Right ventricle myocardium inferior (tissue), 1 donor: ENCODE measurements at regions of chr6 and their contacts with region 1.

Region 1: DNA sequence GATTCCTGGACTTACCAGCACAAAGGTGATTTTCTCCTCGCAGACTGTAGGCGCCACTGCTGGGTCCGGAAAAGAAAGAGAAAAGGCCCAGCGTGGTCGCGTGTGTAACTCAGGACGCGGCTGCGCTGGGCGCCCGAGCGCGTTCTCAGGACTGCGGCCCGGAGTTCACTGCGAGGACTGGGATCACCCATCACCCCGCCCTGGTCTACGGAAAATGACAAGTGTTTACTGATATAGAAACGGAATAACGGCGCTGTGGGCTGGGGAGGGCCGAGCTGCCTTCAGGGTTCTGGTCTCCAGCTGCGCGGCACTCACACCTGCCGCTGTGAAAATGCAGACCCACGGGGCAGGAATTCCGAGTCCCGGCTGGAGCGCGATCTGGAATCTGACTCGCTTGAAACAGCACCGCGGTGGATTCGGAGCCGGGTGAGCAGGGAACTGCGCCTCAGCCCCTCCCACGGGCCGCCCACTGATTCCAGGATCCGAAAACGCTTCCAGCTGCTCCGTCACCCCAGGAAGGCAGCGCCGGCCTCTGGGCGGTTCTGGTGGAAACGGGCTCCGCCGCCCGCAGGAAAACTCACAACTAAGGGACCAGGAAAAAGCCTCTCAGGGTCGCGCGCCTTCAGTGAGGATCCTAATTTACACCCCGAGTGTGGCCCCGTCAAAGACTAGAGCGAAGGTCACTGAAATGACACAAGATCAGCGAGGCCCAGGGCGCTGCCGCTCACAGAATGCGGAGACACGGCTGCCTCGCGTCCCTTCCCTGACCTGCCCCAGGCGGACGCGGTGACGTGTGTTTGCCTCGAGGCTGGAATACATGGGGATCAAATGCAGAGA is 34.5 kb downstream of the HLA-A start:
- DNase-seq: peak; percentile 94
- ATAC-seq: peak; percentile 96

Region 2: DNA sequence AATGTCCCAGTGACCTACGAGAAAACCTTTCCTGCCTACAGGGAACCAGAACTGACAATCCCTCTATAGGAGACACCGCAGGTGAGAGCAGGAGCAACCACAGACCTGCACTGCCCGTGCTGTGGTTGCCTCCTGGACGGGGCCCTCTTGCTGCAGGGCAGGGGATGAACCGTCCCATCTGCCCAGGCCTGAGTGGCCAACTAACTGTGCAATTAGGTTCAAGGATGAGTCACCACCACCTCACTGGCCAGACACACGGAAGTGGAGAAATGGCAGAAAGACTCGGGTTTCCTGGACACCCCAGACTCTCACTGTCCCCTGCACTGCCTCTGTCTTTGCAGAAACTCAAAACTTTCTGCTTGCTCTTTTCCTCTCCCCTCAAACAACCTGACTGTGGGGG is 163.0 kb before region 1 on chr6:
- intact Hi-C with region 1: no loop called
- DNase-seq: no peak
- ATAC-seq: no peak

Region 3: GRCh38 chr6:29887819-29888776 is 88.7 kb before region 1 on chr6:
- intact Hi-C with region 1: loop called (anchors 5 kb)
- DNase-seq: peak; percentile 92
- ATAC-seq: peak; percentile 91

Region 4: DNA sequence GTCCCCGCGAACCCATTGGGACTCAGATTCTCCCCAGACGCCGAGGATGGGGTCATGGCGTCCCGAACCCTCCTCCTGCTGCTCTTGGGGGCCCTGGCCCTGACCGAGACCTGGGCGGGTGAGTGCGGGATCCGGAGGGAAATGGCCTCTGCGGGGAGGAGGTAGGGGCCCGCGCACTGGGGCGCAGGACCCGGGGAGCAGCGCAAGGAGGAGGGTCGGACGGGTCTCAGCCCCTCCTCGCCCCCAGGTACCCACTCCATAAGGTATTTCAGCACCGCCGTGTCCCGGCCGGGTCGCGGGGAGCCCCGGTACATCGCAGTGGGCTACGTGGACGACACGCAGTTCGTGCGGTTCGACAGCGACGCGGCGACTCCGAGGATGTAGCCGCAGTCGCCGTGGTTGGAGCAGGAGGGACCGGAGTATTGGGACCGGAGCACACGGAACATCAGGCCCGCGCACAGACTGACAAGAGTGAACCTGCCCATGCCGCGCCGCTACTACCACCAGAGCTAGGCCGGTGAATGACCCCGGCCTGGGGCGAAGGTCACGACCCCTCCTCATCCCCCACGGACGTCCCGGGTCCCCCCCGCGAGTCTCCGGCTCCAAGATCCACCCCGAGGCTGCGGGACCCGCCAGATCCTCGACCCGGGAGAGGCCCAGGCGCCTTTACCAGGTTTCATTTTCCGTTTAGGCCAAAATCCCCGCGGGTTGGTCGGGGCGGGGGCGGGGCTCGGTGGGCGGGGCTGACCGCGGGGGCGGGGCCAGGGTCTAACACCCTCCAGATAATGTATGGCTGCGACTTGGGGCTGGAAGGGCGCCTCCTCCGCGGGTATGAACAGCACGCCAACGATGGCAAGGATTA is 50.2 kb before region 1 on chr6:
- intact Hi-C with region 1: loop called (anchors 2 kb)
- DNase-seq: peak; percentile 94
- ATAC-seq: peak; percentile 84

Region 5: DNA sequence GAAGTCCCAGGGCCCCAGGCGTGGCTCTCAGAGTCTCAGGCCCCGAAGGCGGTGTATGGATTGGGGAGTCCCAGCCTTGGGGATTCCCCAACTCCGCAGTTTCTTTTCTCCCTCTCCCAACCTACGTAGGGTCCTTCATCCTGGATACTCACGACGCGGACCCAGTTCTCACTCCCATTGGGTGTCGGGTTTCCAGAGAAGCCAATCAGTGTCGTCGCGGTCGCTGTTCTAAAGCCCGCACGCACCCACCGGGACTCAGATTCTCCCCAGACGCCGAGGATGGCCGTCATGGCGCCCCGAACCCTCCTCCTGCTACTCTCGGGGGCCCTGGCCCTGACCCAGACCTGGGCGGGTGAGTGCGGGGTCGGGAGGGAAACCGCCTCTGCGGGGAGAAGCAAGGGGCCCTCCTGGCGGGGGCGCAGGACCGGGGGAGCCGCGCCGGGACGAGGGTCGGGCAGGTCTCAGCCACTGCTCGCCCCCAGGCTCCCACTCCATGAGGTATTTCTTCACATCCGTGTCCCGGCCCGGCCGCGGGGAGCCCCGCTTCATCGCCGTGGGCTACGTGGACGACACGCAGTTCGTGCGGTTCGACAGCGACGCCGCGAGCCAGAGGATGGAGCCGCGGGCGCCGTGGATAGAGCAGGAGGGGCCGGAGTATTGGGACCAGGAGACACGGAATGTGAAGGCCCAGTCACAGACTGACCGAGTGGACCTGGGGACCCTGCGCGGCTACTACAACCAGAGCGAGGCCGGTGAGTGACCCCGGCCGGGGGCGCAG is 34.3 kb before region 1 on chr6 and contains the start of gene HLA-A:
- intact Hi-C with region 1: loop called (anchors 5 kb)
- DNase-seq: peak; percentile 97
- ATAC-seq: peak; percentile 98
- total RNA-seq, gene HLA-A: 249 TPM

Region 6: GRCh38 chr6:30013291-30013922 is 36.6 kb after region 1 on chr6:
- intact Hi-C with region 1: no loop called
- DNase-seq: no peak
- ATAC-seq: no peak

Region 7: DNA sequence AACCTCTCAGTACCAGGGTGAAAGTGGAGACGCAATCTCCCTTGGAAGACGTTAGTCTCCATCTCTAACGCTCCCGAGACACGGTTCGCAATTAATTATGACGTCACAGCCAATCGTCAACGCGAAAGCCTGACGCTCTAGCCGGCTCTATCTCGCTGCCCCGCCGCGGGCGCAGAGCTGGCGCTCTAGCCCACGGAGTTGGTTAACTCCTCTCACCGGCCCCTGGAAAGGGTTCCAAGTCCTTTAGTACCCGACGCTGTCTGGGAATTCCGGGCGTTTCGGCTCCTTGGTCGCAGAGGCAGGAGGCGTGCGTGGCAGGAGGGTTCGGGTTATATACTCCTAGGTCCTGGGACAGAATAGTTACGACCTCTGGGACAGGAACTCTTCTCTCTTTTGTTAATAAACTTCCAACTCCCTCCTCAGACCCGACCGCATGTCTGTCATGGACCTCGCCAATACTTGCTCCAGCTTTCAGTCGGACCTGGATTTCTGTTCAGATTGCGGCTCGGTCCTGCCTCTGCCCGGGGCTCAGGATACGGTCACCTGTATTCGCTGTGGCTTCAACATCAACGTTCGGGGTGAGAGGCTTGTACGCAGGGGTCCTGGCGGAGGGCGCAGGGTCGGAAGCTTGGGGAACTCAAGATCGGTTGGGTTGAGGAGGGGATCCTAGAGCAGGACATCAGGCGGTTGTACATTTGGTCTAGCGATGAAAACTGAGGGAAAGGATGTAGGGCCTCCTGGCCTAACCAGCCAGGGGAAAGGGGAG is 84.5 kb after region 1 on chr6 and contains the start of gene POLR1H:
- intact Hi-C with region 1: loop called (anchors 2 kb)
- DNase-seq: peak; percentile 94
- ATAC-seq: peak; percentile 98
- total RNA-seq, gene POLR1H: 13.1 TPM